Dorsolateral prefrontal cortex (tissue), 120 donors: ENCODE measurements at regions of chr10 and their contacts with region 1.

Region 1: GRCh38 chr10:112295853-112296830 is 12.9 kb downstream of the TECTB start:
- DNase-seq: no peak
- H3K4me3 ChIP-seq: no peak overlapping the region
- H3K27ac ChIP-seq: no peak overlapping the region
- H3K27me3 ChIP-seq: peaks cover 0 to 14% (median 0%) of the 10 kb centered on the region in 45 donors
- CTCF ChIP-seq: no peak

Region 2: DNA sequence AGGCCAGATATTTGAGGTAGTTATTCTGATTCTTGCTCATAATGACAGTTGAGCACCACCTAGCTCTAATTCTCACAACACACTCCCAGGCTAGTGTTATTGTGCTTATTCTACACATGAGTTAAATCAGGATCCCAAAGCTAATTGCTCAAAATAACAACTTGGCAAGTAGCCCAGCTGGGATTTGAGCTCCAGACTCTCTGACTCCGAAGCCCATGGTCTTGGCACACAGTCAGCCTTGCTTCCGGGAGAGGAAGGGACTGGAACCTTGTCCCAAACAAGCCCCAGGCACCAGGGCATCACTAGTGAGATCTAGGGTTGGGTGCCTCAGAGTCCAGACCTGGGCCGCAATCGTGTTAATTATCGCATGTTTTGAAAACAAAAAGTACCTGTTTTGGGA is 214.0 kb before region 1 on chr10:
- intact Hi-C with region 1: no loop called
- DNase-seq: peak in 1 of 10 donors; percentile 19
- H3K4me3 ChIP-seq: no peak overlapping the region
- H3K27ac ChIP-seq: no peak overlapping the region
- H3K27me3 ChIP-seq: peaks cover 0 to 12% (median 0%) of the 10 kb centered on the region in 45 donors
- CTCF ChIP-seq: no peak

Region 3: DNA sequence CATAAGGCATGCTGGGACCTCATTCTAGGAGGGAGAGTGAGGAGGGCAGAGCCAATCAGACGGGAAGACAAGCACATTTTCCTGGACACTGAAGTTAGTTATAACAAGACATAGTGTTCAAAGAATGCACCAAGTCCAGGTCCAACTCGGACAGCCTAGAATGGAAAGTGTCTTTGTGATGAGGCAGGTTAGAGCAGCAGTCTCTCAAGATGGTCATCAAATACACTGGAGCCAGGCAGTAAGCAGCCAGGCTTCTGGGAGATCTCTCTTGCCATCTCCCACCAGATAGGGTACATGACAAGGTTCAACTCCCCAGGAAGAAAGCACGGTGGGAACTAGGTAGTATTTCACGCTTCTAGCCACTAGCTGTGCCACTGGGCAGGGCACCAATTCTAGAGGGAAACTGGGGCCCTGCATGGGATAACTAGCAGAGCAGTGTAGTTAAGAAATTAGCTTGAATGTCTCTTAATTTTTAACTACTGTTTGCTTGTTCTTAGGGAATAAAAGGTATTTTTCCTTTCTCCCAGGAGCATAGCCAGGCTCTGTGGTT is 105.0 kb before region 1 on chr10:
- intact Hi-C with region 1: loop called in 1 of 2 experiments (anchors 10 kb)
- DNase-seq: no peak
- H3K4me3 ChIP-seq: no peak overlapping the region
- H3K27ac ChIP-seq: peak overlapping the region in 26 of 59 donors; percentile 2 to 66 (median 44)
- H3K27me3 ChIP-seq: no peaks in the 10 kb centered on the region
- CTCF ChIP-seq: no peak